ENCODE measurements at regions of chr3 and their contacts with region 1.

Region 1: DNA sequence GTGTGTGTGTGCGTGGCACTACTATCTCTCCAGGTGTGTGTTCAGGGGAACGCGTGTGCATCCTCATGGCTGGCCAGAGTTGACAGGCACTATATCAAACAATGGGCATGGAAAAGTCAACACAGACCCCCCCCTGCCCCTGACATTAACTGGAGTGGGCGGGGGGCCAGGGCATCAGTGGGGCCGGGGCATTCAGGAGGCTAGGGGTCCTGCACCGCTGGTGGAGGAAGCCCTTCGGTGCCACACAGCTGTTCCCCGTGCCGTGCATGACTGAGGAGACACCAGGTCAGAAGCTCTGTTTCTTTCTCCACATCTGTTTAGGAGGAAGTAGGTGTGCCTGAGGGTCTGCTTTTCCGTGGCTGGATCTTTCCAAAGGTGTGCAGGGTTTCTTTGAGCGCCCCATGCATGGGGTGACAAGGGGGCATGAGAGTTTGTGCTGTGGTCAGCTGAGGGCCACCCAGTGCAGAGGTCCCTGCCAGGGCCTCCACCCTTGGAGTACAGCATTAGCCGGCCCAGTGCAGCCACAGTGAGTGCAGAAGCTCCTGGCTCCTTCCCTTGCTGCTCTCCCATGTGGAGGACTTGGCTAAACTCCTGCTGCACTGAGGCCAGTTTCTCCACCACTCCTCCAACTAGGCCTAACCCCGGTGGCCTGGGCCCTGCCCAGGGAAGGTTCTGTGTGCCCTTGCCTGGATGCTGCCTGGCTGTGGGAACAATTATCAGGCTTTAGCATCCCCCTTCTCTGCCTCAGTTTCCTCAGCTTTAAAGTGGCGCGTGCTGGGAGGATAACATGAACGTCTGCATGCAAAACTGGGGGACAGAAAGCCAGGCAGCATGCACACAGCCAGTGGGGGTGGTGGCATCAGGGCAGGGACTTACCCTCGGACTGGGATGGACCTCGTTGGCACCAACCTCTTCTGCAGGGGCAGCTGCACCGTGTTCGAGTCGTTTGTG is 7.3 kb downstream of the C3orf22 start:
- DNase-seq: no peak
- ATAC-seq: 0 out of 3 replicates have a peak, but pooled peaks have one; percentile 5
- H3K4me3 ChIP-seq: no peak overlapping the region
- H3K27ac ChIP-seq: no peak overlapping the region
- H3K4me1 ChIP-seq: peaks cover 8% of the 10 kb centered on the region; the same call in 1 of the 2 replicates
- H3K27me3 ChIP-seq: peaks cover 5 to 35% of the 10 kb centered on the region in 2 experiments; a peak in 2 of 5 replicates
- CTCF ChIP-seq: no peak
- EP300 ChIP-seq: no peak
- POLR2A ChIP-seq: no peak
- RAD21 ChIP-seq: no peak

Region 2: GRCh38 chr3:126493739-126494138 is 57.7 kb before region 1 on chr3:
- CTCF ChIA-PET with region 1: no interaction called
- POLR2A ChIA-PET with region 1: no interaction called
- in situ Hi-C with region 1: no loop called
- intact Hi-C with region 1: loop called (anchors 10 kb)
- DNase-seq: no peak
- ATAC-seq: no peak
- H3K4me3 ChIP-seq: no peak overlapping the region
- H3K27ac ChIP-seq: no peak overlapping the region
- H3K4me1 ChIP-seq: peaks cover 22% of the 10 kb centered on the region
- H3K27me3 ChIP-seq: no peaks in the 10 kb centered on the region; a peak in 1 of 5 replicates
- CTCF ChIP-seq: no peak
- EP300 ChIP-seq: no peak
- POLR2A ChIP-seq: no peak
- RAD21 ChIP-seq: no peak

Region 3: GRCh38 chr3:126692845-126693244 is 141.4 kb after region 1 on chr3:
- CTCF ChIA-PET with region 1: no interaction called
- POLR2A ChIA-PET with region 1: no interaction called
- in situ Hi-C with region 1: no loop called
- intact Hi-C with region 1: no loop called
- DNase-seq: no peak
- ATAC-seq: no peak
- H3K4me3 ChIP-seq: no peak overlapping the region
- H3K27ac ChIP-seq: no peak overlapping the region
- H3K4me1 ChIP-seq: no peaks in the 10 kb centered on the region
- H3K27me3 ChIP-seq: peaks cover 0 to 12% of the 10 kb centered on the region in 2 experiments; a peak in 2 of 5 replicates
- CTCF ChIP-seq: no peak
- EP300 ChIP-seq: no peak
- POLR2A ChIP-seq: no peak
- RAD21 ChIP-seq: no peak

Region 4: DNA sequence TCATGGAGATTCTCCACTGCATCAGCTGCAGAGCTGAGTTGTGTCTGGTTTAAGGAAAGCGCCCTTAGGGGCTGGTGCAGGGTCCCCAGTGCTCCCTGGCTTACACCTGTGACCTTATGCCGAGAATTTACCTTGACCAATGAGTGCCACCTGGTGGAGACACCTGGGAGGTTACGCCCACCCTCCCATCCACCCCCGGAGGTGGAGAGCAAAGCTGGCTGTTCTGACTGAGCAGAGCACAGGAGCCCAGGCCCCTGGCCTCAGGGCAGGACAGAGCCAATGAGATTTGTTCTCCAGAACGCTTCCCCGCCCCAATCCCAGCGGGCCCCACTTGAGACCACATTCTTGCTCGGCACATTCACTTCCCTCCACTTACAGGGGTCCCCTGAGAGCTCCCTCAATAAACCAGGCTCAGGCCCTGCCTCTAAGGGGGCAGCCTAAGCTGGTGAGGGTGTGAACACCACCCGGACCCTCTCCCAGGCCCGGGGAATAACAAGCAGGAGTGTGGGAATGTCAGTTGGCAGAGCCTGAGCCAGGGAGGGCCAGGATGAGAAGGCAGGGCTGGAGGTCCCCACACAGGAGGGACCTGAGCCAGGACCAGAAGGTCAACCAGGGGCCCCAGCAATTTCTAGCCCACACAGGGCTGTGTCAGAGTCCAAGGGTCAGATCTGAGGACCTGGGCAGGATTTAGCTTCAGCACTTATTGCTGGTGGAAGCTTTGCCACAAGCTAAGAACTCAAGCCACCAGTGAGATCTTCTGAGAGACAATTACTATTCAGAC is 922.0 kb after region 1 on chr3:
- CTCF ChIA-PET with region 1: no interaction called
- POLR2A ChIA-PET with region 1: no interaction called
- in situ Hi-C with region 1: no loop called
- intact Hi-C with region 1: loop called (anchors 10 kb)
- DNase-seq: peak; percentile 53
- ATAC-seq: peak; percentile 95
- H3K4me3 ChIP-seq: peak overlapping the region in 2 of 3 experiments; percentile 24 to 36; a peak in 3 of 6 replicates
- H3K27ac ChIP-seq: peak overlapping the region; percentile 24
- H3K4me1 ChIP-seq: peaks cover 24% of the 10 kb centered on the region
- H3K27me3 ChIP-seq: peaks cover 2 to 6% of the 10 kb centered on the region in 2 experiments; a peak in 1 of 5 replicates
- CTCF ChIP-seq: peak; percentile 72
- EP300 ChIP-seq: no peak
- POLR2A ChIP-seq: no peak
- RAD21 ChIP-seq: no peak

Measured in HepG2 (cell line).